Caco-2 (cell line): ENCODE measurements at regions of chr16 and their contacts with region 1.

Region 1: DNA sequence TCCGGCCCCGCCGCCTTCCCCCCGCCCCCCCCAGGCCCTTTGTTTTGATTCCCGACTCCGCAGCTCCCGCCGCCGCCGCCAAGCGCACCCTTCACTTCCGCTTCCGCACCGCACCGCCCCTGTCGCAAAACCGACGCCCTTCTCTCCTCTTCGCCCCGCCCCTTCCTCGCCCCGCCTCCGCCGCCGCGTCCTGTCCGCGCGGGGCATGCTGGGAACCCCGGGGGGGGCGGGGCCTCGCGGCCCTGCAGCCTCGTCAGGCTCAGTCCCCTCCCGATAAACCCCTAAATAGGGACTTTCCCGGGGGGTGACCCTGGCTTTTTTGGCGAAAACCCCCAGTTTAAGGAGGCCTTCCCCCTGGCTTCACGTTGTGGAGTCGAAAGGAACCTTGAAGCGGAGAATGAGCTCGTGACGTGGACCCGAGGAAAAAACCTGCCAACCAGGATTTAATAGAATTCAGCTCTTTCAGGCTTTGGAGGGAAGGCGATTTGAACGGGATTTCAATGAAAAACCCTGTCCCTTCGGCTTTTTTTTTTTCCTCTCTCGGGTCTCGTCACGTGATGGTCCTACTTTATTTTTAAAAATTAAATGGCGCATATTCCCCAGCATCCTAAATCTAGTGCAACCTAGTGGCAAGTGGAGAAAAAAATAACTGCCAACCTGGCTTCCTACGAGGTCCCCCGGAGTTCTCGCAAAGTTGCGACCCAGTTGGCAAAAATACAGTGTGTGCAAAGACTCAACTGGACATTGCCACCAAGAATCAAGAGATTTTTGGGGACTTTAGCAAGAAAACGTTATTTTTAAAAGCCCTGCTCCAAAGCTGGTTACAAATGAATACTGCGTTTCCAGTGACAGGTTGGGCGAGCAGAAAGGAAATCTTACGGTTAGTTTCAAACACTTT is at the start of gene MARF1:
- DNase-seq: peak; percentile 97 to 98
- H3K4me3 ChIP-seq: peak within 1 kb of the TSS; percentile 74
- H3K4me3 Mint-ChIP-seq: peak within 1 kb of the TSS; percentile 85
- H3K27ac Mint-ChIP-seq: peak within 1 kb of the TSS; percentile 92
- H3K4me1 ChIP-seq: peaks cover 17% of the 10 kb centered on the region
- H3K4me1 Mint-ChIP-seq: no peaks in the 10 kb centered on the region
- H3K27me3 ChIP-seq: no peaks in the 10 kb centered on the region
- H3K27me3 Mint-ChIP-seq: no peaks in the 10 kb centered on the region
- CTCF ChIP-seq: peak; percentile 12 to 34
- total RNA-seq, gene MARF1: 20.2 and 22.3 TPM in 2 replicates

Region 2: GRCh38 chr16:15539197-15539596 is 104.1 kb before region 1 on chr16:
- CTCF ChIA-PET with region 1: interaction called, 3 read pairs
- POLR2A ChIA-PET with region 1: no interaction called
- intact Hi-C with region 1: loop called (anchors 10 kb)
- DNase-seq: peak; percentile 39 to 54
- H3K4me3 ChIP-seq: no peak overlapping the region
- H3K4me3 Mint-ChIP-seq: no peak overlapping the region
- H3K27ac Mint-ChIP-seq: no peak overlapping the region
- H3K4me1 ChIP-seq: no peaks in the 10 kb centered on the region
- H3K4me1 Mint-ChIP-seq: no peaks in the 10 kb centered on the region
- H3K27me3 ChIP-seq: no peaks in the 10 kb centered on the region
- H3K27me3 Mint-ChIP-seq: peaks cover 5% of the 10 kb centered on the region
- CTCF ChIP-seq: peak in 1 of 2 experiments; percentile 16

Region 3: DNA sequence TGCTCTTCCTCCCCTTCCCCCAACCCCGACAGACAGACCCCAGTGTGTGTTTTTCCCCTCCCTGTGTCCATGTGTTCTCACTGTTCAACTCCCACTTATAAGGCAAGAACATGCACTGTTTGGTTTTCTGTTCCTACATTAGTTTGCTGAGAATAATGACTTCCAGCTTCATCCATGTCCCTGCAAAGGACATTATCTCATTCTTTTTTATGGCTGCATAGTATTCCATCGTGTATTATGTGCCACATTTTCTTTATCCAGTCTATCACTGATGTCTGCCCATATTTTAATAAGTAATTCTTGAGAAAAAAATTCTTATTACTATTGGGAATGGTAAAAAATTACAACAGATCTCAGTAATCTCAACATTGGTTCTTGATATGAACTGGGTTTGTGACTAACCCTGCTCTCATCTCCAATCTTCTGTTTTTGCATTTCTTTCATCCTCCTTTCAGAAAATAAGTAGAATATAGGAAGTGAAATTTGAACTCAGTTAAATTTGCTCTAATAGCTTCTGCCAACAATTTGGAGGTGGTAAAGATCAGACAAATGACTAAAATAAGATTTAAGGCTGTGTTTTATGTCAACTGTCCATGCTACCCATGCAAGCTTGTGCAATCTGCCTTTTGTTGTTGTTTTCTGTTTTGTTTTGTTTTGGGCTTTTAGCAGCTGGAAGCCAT is 11.4 kb before region 1 on chr16:
- CTCF ChIA-PET with region 1: interaction called, 3 read pairs
- POLR2A ChIA-PET with region 1: interaction called, 9 read pairs
- intact Hi-C with region 1: loop called (anchors 1 kb)
- DNase-seq: no peak
- H3K4me3 ChIP-seq: no peak overlapping the region
- H3K4me3 Mint-ChIP-seq: no peak overlapping the region
- H3K27ac Mint-ChIP-seq: no peak overlapping the region
- H3K4me1 ChIP-seq: peaks cover 13% of the 10 kb centered on the region
- H3K4me1 Mint-ChIP-seq: peaks cover 8% of the 10 kb centered on the region
- H3K27me3 ChIP-seq: no peaks in the 10 kb centered on the region
- H3K27me3 Mint-ChIP-seq: no peaks in the 10 kb centered on the region
- CTCF ChIP-seq: no peak

Region 4: GRCh38 chr16:15682105-15682570 is 38.8 kb after region 1 on chr16:
- CTCF ChIA-PET with region 1: interaction called, 15 read pairs
- POLR2A ChIA-PET with region 1: no interaction called
- intact Hi-C with region 1: no loop called
- DNase-seq: peak; percentile 45 to 55
- H3K4me3 ChIP-seq: no peak overlapping the region
- H3K4me3 Mint-ChIP-seq: no peak overlapping the region
- H3K27ac Mint-ChIP-seq: no peak overlapping the region
- H3K4me1 ChIP-seq: no peaks in the 10 kb centered on the region
- H3K4me1 Mint-ChIP-seq: no peaks in the 10 kb centered on the region
- H3K27me3 ChIP-seq: no peaks in the 10 kb centered on the region
- H3K27me3 Mint-ChIP-seq: no peaks in the 10 kb centered on the region
- CTCF ChIP-seq: peak; percentile 33 to 50